ENCODE measurements at regions of chr15 and their contacts with region 1.

Region 1: GRCh38 chr15:66356345-66357236 is at the start of gene TIPIN:
- DNase-seq: peak; percentile 89 to 98 (median 95)
- ATAC-seq: peak; percentile 97 to 99 (median 99)
- H3K4me3 ChIP-seq: peak within 1 kb of the TSS; percentile 84 to 91
- H3K4me3 Mint-ChIP-seq: peak within 1 kb of the TSS; percentile 94 to 97 (median 95)
- H3K27ac ChIP-seq: peak within 1 kb of the TSS; percentile 57
- H3K27ac Mint-ChIP-seq: peak within 1 kb of the TSS; percentile 92 to 94
- H3K4me1 ChIP-seq: peaks cover 4 to 15% of the 10 kb centered on the region in 2 experiments
- H3K4me1 Mint-ChIP-seq: peaks cover 16 to 27% (median 22%) of the 10 kb centered on the region in 3 donors
- H3K27me3 ChIP-seq: no peaks in the 10 kb centered on the region
- H3K27me3 Mint-ChIP-seq: no peaks in the 10 kb centered on the region
- total RNA-seq, gene TIPIN: 3.6 to 8.4 (median 6.6) TPM

Region 2: GRCh38 chr15:66503780-66504562 is 147.4 kb after region 1 on chr15:
- CTCF ChIA-PET with region 1: interaction called in 1 of 2 experiments, 16 read pairs
- POLR2A ChIA-PET with region 1: interaction called in 1 of 2 experiments, 16 read pairs
- DNase-seq: no peak
- ATAC-seq: no peak
- H3K4me3 ChIP-seq: peak overlapping the region; percentile 88 to 99
- H3K4me3 Mint-ChIP-seq: peak overlapping the region; percentile 91 to 100 (median 99)
- H3K27ac ChIP-seq: peak overlapping the region; percentile 86
- H3K27ac Mint-ChIP-seq: peak overlapping the region; percentile 98
- H3K4me1 ChIP-seq: peaks cover 23 to 25% of the 10 kb centered on the region in 2 experiments
- H3K4me1 Mint-ChIP-seq: peaks cover 52 to 54% (median 52%) of the 10 kb centered on the region in 3 donors
- H3K27me3 ChIP-seq: no peaks in the 10 kb centered on the region
- H3K27me3 Mint-ChIP-seq: no peaks in the 10 kb centered on the region